ENCODE measurements at regions of chr9 and their contacts with region 1.

Region 1: DNA sequence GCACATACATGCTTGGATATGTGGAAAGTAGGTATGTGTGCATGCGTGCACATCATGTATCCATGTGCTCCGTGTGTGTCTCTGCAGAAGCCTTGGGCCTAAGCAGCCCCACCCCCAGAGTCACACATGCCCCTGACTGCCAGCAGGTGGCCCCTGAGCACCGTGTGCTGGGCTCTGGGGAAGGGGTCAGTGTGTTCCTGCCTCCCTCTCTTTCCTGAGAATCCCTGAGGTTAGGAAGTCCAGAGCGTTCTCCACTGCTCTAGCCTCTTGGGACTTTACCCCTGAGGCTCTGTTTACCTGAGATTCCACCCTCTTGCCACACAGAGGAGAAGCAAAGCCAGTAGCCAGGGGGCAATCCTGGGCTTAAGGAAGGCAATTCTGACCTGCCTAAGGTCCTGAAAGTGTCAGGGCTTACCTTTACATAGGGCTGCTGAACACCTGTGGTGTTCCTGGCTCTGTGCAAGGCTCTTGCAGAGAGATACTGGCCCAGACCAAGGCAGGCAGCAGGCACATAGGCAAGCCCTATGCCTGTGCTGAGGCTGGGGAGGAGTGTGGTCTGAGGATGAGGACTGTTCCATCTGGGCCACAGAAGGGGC is 207.3 kb downstream of the TMEM38B start:
- DNase-seq: no peak
- H3K4me3 Mint-ChIP-seq: no peak overlapping the region
- H3K27ac Mint-ChIP-seq: no peak overlapping the region
- H3K4me1 Mint-ChIP-seq: no peaks in the 10 kb centered on the region
- H3K27me3 Mint-ChIP-seq: no peaks in the 10 kb centered on the region

Region 2: DNA sequence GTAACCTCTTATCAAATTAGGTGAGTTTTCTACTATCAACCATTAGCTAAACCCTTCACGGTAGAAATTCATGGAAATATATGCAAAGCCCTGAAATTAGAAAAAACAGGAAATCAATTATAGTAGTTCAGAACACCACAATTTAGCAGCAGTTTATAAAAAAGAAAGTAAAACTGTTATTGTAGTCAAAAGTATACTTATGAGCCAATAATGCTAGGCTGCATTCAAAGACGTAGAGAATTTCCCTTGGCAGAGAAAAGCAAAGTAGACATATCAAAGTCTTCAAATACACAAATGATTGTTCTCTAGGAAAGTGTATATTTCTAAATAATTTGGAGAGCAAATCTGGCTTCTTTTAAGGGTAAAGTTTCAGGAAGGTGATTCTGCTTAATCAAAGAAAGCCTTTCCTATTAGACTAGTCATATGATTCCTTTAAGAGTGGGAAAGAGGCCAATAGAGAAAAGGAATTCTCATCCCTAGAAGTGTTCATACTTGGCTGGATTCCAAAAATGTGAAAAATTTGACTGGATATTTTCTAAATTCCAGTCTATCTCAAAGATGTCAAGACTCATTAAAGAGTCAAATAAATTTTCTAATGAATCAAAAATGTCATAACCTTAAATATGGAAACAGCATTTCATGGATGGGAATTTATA is 1621.9 kb before region 1 on chr9:
- CTCF ChIA-PET with region 1: no interaction called
- intact Hi-C with region 1: no loop called
- DNase-seq: no peak
- H3K4me3 Mint-ChIP-seq: no peak overlapping the region
- H3K27ac Mint-ChIP-seq: no peak overlapping the region
- H3K4me1 Mint-ChIP-seq: no peaks in the 10 kb centered on the region
- H3K27me3 Mint-ChIP-seq: peaks cover 4% of the 10 kb centered on the region

Region 3: DNA sequence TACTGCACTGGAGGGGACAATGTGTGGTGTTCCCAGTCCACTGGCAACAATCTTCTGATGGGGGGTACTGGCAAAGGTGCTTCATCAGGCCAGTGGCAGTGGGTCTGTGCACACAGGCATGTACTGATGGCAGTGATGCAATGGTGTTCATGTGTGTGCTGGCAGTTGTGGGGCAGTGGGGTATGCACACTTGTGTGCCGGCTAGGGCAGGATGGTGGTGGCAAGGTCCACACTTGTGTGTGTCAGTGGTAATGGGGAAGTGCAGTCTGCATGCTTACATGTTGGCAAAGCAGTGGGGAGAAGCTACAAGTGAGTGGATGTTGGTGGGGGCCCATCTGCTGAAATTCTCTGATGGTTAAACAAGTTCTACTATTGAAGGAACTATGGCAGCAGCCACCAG is 456.7 kb after region 1 on chr9:
- CTCF ChIA-PET with region 1: no interaction called
- intact Hi-C with region 1: no loop called
- DNase-seq: no peak
- H3K4me3 Mint-ChIP-seq: no peak overlapping the region
- H3K27ac Mint-ChIP-seq: no peak overlapping the region
- H3K4me1 Mint-ChIP-seq: no peaks in the 10 kb centered on the region
- H3K27me3 Mint-ChIP-seq: no peaks in the 10 kb centered on the region

Region 4: GRCh38 chr9:106862825-106863720 is 961.5 kb after region 1 on chr9 and contains the start of gene ZNF462:
- CTCF ChIA-PET with region 1: no interaction called
- intact Hi-C with region 1: loop called (anchors 10 kb)
- DNase-seq: peak; percentile 13
- H3K4me3 Mint-ChIP-seq: peak within 1 kb of the TSS; percentile 76
- H3K27ac Mint-ChIP-seq: no peak within 1 kb of the TSS
- H3K4me1 Mint-ChIP-seq: peaks cover 32% of the 10 kb centered on the region
- H3K27me3 Mint-ChIP-seq: peaks cover 69% of the 10 kb centered on the region
- total RNA-seq, gene ZNF462: 0.33 to 0.40 TPM